HCT116 (cell line): ENCODE measurements at regions of chr20 and their contacts with region 1.

Region 1: GRCh38 chr20:23419995-23420901 is 1.0 kb downstream of the NAPB start:
- DNase-seq: no peak
- ATAC-seq: peak; percentile 19; the same call in 1 of the 2 replicates
- H3K4me3 ChIP-seq: peak overlapping the region; percentile 83 to 87
- H3K27ac ChIP-seq: peak overlapping the region; percentile 69; the same call in 1 of the 2 replicates
- H3K4me1 ChIP-seq: peaks cover 2 to 12% of the 10 kb centered on the region in 2 experiments; a peak in 3 of 4 replicates
- H3K27me3 ChIP-seq: no peaks in the 10 kb centered on the region
- CTCF ChIP-seq: no peak
- POLR2A ChIP-seq: no peak
- RAD21 ChIP-seq: no peak

Region 2: DNA sequence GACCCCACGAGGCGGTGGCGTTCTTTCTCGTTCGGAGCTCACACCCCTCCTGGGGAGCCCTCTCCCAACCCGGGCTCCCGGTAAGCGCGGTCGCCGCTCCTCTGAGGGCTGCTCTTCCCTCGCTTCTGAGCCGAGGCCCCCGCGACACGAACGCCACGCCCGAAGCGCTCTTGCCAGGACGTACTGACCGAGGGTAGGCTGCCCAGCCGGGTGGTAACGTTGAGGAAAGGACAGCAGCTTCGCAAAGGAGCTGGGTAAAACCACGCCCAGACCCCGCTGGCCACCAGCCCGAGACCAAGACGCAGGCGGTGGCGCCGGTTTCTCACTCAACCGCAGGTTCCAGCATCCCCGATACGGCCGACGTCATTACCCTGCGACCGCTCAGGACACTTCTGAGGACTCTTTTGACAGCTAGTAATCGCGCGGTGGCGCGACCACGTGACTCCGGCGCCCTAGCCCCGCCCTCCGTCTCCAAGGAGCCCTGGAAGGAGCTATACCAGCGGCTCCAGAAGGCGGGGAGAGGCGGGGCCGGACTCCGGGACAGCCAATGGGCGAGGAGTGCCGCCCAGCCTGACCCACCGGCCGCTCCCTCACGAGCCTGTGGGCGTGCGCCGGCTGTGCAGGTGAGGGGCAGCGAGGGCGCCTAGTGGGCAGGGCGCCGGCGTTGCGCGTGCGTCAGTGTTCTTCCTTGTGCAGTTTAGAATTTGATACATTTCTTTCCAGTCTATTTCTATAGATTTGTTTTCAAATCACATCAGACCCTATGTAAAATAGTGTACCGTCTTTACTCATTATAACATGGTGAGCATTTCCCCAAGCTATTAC is 62.3 kb before region 1 on chr20:
- CTCF ChIA-PET with region 1: interaction called, 4 read pairs
- POLR2A ChIA-PET with region 1: interaction called, 5 read pairs
- RAD21 ChIA-PET with region 1: no interaction called
- intact Hi-C with region 1: loop called (anchors 10 kb)
- DNase-seq: peak; percentile 99
- ATAC-seq: peak; percentile 83
- H3K4me3 ChIP-seq: peak overlapping the region; percentile 75 to 82
- H3K27ac ChIP-seq: peak overlapping the region; percentile 81
- H3K4me1 ChIP-seq: peaks cover 19 to 38% of the 10 kb centered on the region in 2 experiments
- H3K27me3 ChIP-seq: no peaks in the 10 kb centered on the region
- CTCF ChIP-seq: no peak
- POLR2A ChIP-seq: peak; percentile 7
- RAD21 ChIP-seq: no peak